Activated naive CD4-positive, alpha-beta T cell treated with anti-CD3 and anti-CD28 coated beads for 36 hours (primary cell): ENCODE measurements at regions of chr7 and their contacts with region 1.

Region 1: GRCh38 chr7:128862571-128863432 is at the start of gene ATP6V1F:
- DNase-seq: peak; percentile 99
- H3K4me3 Mint-ChIP-seq: peak within 1 kb of the TSS; percentile 91
- H3K27ac Mint-ChIP-seq: peak within 1 kb of the TSS; percentile 84
- H3K4me1 Mint-ChIP-seq: peaks cover 15% of the 10 kb centered on the region
- H3K27me3 Mint-ChIP-seq: no peaks in the 10 kb centered on the region
- total RNA-seq, gene ATP6V1F: 129 to 142 TPM

Region 2: DNA sequence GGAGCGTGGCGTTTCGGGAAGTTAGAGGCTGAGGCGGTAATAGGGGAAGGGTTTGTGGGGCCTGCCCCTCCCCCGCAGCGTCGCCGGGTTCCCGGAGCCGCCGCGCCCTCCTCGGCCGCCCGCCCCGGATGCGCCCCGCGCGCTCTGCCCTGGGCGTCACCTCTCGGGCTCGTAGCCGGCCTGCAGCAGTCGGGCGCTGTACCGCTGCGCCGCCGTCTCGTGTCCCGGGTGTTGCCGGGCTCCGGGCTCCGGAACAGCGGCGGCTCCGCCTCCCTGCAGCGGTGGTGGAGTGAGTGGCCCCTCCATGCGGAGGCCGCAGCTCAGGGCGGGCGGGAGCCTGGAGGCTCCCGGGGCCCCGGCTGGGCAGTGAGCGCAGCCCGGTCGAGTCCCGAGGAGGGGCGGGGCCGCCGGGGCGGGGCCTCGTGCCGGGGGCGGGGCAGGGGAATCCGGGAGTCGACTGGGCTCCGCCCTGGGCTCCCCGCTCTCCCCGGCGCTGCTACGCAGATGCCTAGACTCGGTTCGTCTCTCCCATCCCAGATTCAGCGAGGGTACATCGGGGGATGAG is 453.1 kb before region 1 on chr7 and contains the start of gene IMPDH1:
- CTCF ChIA-PET with region 1: no interaction called
- intact Hi-C with region 1: loop called (anchors 2 kb)
- DNase-seq: peak; percentile 86
- H3K4me3 Mint-ChIP-seq: peak within 1 kb of the TSS; percentile 85
- H3K27ac Mint-ChIP-seq: peak within 1 kb of the TSS; percentile 47
- H3K4me1 Mint-ChIP-seq: peaks cover 20% of the 10 kb centered on the region
- H3K27me3 Mint-ChIP-seq: peaks cover 2% of the 10 kb centered on the region
- total RNA-seq, gene IMPDH1: 44.3 to 45.9 TPM

Region 3: GRCh38 chr7:128739048-128739962 is 123.5 kb before region 1 on chr7 and contains the start of gene CALU:
- CTCF ChIA-PET with region 1: no interaction called
- intact Hi-C with region 1: loop called (anchors 1 kb)
- DNase-seq: peak; percentile 97
- H3K4me3 Mint-ChIP-seq: peak within 1 kb of the TSS; percentile 99
- H3K27ac Mint-ChIP-seq: peak within 1 kb of the TSS; percentile 96
- H3K4me1 Mint-ChIP-seq: peaks cover 43% of the 10 kb centered on the region
- H3K27me3 Mint-ChIP-seq: no peaks in the 10 kb centered on the region
- total RNA-seq, gene CALU: 33.0 to 35.4 TPM

Region 4: DNA sequence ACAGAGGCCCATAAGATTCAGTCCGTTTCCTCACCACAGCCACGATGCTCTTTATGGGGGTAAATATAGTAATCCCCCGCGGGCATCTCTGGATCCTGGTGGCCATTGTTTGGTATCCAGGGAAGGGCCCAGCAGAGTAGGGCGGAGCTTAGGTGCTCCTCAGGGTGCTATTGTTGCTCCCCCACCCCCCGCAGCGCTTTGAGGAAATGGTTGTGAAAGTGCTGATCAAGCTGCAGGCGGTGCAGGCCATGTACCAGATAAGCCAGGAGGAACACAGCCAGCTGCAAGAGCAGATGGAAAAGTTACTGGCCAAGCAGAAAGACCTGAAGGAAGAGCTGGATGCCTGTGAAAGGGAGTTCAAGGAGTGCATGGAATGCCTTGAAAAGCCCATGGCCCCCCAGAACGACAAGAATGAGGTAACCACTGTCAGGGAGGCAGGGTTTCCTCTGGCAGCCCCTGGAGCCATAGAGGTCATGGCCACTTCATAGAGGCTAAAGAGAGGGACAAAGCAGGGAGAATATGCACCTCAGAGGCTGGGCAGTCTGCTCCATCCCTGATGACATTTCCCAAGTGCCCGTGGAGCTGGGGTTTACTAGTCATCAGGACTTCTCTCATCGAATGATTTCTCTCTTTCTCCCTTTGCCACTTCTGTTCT is 50.2 kb before region 1 on chr7:
- CTCF ChIA-PET with region 1: no interaction called
- intact Hi-C with region 1: no loop called
- DNase-seq: no peak
- H3K4me3 Mint-ChIP-seq: no peak overlapping the region
- H3K27ac Mint-ChIP-seq: no peak overlapping the region
- H3K4me1 Mint-ChIP-seq: no peaks in the 10 kb centered on the region
- H3K27me3 Mint-ChIP-seq: no peaks in the 10 kb centered on the region

Region 5: DNA sequence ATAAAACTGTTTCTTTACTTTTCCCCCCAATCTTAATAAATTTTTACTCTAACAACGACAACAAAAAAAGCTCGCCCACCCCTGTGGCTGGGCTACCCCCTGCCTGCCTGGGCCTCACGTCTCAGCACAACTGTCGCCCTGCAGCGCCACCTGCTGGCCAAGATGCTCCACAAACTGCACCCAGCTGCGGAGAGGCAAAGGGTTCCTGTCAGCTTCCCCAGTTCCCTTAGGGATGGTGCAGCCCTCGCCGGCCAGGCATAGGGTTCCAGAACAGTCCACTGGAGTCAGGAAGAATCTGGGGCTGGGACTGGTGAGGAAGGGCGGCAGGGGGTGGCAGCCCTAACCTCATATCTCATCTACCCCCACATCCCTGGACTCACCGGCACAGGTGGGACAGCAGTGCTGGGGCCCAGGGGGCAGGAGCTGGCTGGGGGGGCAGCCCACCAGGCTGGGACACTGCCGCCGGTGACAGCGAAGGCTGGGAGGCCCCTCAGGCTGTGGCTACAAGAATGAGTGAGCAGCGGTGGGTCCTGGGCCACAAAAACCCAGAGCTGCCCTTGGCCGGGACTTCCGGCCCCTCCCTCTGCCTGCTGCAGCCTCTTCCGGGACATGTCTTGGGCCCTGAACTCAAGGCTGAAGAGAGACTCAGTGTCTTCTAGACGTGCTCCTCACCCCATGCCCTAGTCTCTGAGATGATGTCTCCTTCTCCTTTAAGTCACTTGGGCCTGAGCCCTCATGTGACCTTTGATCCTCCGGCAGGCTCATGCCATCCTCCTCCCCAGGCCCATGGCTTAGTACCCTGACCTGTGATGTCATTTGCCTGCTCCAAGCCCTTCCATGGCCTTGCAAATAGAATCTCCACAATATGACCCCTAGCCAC is 21.1 kb after region 1 on chr7:
- CTCF ChIA-PET with region 1: interaction called, 25 read pairs
- intact Hi-C with region 1: loop called (anchors 1 kb)
- DNase-seq: peak; percentile 90
- H3K4me3 Mint-ChIP-seq: no peak overlapping the region
- H3K27ac Mint-ChIP-seq: no peak overlapping the region
- H3K4me1 Mint-ChIP-seq: no peaks in the 10 kb centered on the region
- H3K27me3 Mint-ChIP-seq: peaks cover 3% of the 10 kb centered on the region

Region 6: DNA sequence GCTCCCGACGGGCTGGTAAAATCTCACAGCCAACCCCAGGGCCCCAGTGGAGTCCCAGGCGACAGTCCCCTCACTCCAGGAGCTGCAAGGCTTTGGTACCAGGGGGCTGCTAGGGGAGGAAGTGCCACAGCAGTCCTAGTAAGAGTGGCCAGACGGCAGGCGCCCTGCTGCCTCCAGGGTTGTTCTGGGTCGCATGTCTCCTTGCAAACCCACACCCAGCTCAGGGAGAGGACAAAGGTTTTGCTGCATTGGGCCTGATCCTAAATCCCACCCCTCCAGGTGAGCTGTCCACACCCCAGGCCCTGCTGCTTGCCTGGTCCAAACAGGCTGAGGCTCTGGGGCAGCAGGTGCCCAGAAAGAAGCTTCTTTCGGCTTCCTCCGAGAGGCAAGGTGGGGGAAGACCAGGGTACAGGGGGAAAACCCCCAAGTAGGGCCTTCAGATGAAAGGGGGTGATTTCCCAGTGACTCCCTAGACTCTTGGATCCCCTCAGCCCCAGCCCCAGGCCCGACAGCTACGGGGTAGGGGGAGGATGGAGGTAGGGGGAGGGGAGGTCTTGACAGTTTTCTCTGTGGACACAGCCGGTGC is 51.9 kb after region 1 on chr7:
- CTCF ChIA-PET with region 1: no interaction called
- intact Hi-C with region 1: no loop called
- DNase-seq: peak; percentile 47
- H3K4me3 Mint-ChIP-seq: no peak overlapping the region
- H3K27ac Mint-ChIP-seq: no peak overlapping the region
- H3K4me1 Mint-ChIP-seq: peaks cover 10% of the 10 kb centered on the region
- H3K27me3 Mint-ChIP-seq: peaks cover 54% of the 10 kb centered on the region

Region 7: DNA sequence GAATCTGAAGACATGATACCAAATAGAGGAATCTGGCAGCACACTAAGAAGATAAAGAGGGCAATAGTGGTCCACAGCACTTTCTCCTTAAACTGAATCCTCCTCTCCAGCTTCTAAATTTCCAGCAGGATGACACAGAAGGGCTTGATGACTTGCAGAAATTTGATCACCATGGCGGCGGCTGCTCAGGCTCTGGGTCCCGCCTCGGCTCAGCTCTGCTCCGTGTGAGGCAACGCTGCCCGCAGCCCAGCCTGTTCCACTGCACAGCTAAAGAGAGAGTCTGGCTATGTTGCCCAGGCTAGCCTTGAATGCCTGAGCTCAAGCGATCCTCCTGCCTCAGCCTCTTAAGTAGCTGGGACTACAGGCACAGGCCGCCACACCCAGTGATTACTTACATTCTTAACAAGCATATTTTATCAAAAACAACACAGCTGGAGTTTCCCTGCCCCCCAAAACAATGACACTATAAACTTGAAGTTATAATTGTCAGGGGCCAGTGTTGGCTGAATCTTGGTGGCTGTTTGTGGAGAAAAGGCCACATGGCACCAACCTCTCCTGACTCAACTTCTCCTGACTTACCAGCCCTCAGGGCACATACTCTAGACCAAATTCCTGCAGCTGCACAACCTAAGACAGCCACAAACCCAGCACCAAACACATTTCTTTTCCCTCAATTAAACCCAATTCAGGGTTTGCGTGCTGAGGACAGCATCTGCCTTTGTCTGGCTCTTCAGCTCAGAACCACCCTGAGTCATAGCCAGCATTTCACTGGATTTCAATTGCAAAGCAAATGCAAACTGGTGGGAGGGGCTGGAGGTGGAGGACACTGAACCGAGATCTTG is 203.7 kb after region 1 on chr7:
- CTCF ChIA-PET with region 1: no interaction called
- intact Hi-C with region 1: no loop called
- DNase-seq: no peak
- H3K4me3 Mint-ChIP-seq: no peak overlapping the region
- H3K27ac Mint-ChIP-seq: no peak overlapping the region
- H3K4me1 Mint-ChIP-seq: no peaks in the 10 kb centered on the region
- H3K27me3 Mint-ChIP-seq: peaks cover 4% of the 10 kb centered on the region

Region 8: GRCh38 chr7:129136887-129137642 is 274.3 kb after region 1 on chr7:
- CTCF ChIA-PET with region 1: no interaction called
- intact Hi-C with region 1: loop called (anchors 1 kb)
- DNase-seq: no peak
- H3K4me3 Mint-ChIP-seq: peak overlapping the region; percentile 22
- H3K27ac Mint-ChIP-seq: peak overlapping the region; percentile 82
- H3K4me1 Mint-ChIP-seq: peaks cover 27% of the 10 kb centered on the region
- H3K27me3 Mint-ChIP-seq: no peaks in the 10 kb centered on the region

Region 9: DNA sequence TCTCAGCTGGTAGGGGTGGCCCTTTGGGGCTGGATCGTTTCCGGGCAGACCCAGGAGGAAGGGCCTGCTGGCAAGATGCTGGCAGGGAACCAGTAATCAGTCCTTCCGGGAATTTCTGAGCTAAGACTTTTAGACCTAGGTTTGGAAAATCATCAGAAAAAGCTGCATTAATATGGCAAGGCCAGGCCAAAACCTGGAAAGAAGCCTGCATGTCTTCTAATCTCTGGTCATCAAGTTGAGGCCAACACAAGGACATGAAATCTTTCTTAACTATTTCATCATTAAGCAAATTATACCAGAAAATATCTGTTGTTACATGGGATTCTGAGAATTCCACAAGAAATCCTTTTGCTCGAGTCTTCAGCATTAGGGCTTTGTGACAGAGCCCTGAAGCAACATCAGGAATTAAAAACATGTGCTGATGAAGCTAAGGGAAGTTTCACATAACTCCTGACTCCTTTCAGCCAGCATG is 1537.4 kb after region 1 on chr7:
- CTCF ChIA-PET with region 1: no interaction called
- intact Hi-C with region 1: no loop called
- DNase-seq: no peak
- H3K4me3 Mint-ChIP-seq: no peak overlapping the region
- H3K27ac Mint-ChIP-seq: no peak overlapping the region
- H3K4me1 Mint-ChIP-seq: peaks cover 4% of the 10 kb centered on the region
- H3K27me3 Mint-ChIP-seq: no peaks in the 10 kb centered on the region